ENCODE measurements at regions of chr9 and their contacts with region 1.

Region 1: DNA sequence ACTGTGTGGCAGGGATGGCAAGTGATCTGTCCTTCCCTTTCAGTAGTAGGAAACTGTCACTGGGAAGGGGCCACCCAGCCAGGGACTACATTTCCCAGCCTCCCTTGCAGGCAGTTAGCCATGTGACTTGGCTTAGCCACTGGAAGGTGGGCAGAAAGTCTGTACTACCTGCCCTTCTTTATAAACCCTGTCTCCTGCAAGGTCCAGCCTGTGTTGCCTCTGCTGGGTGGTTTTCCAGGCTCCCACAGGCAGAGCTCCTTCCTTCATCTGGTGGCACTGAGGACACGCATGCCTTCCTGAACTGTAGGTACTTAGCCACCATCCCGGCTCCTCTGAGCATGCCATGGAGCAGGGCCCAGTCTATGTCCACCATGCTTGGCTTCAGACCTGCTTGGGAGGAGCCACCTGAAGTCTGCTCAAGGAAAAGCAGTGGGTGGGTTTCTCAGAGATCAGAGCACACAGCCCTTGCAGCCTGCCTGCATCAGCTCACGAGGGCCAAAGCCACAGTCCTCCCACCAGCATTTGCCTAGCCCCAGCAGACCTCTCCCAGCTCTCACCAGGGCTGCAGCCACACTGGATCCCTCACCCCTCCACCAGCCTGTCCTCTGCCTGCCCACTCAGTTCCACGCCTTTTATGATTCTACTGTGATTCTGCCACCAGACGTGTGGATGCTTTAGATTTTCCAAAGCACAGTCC is 16.7 kb upstream of the SLC25A51 start:
- DNase-seq: peak; percentile 44
- ATAC-seq: peak; percentile 76
- H3K4me3 Mint-ChIP-seq: no peak overlapping the region
- H3K27ac Mint-ChIP-seq: no peak overlapping the region
- H3K4me1 Mint-ChIP-seq: no peaks in the 10 kb centered on the region
- H3K27me3 Mint-ChIP-seq: no peaks in the 10 kb centered on the region
- CTCF ChIP-seq: no peak

Region 2: DNA sequence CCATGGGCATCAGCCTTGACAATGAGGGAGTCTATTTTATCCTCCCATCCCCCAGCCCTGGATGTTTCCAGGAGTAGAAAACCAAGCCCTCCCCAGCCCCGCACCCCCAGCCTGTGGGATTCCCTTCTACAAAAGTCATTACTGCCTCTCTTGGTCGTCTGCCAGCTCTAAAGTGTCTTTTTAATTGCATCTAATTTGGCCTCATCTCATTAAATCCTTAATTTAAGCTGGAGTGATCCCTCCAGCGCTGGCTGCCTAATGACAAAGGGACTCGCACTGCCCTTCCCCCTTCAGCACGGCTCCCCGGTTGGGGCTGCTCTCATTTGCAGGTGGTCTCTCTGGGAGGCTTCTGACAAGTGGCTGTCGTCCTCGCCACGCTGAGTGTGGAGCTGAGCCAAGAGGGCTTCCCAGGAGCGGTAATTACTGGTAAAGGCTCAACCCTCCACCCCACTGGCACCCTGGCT is 364.0 kb after region 1 on chr9:
- CTCF ChIA-PET with region 1: no interaction called
- POLR2A ChIA-PET with region 1: no interaction called
- intact Hi-C with region 1: loop called (anchors 10 kb)
- DNase-seq: no peak
- ATAC-seq: no peak
- H3K4me3 Mint-ChIP-seq: no peak overlapping the region
- H3K27ac Mint-ChIP-seq: no peak overlapping the region
- H3K4me1 Mint-ChIP-seq: peaks cover 4% of the 10 kb centered on the region
- H3K27me3 Mint-ChIP-seq: no peaks in the 10 kb centered on the region
- CTCF ChIP-seq: no peak

Measured in activated CD8-positive, alpha-beta T cell treated with anti-CD3 and anti-CD28 coated beads for 36 hours (primary cell).